ENCODE measurements at regions of chr5 and their contacts with region 1.

Region 1: DNA sequence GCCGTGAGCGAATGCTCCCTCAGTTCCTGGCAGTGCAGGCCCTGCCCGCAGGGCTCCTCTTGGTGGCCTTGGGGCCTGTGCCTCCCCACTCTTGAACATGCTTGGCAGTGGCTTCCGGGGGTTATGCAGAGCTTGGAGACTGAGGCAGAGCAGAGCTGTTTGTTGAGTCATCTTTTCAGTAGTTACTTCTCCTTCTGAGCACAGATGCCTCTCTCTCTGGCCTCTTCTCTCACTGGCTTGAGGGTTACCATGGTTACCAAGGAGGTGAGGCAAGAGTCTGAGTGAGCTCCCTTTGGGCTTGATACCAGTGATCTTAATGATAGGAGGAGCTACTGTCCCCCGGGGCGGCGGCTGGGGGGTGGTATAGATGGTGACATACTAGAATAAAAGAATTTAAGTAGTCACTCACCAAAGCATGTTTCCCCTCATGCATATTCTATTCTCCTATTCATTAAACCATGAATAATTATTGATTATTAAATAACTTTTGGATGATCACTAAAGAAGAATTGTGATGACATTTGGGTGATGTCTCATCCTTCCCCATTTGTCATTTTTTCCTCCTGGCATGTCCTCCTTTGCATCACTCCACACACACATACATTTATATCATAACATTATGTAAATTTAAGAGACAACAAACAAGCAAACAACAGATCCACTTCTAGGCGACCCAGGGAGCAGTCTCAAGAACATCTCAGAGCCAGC is 111.1 kb downstream of the ARHGAP26 start:
- DNase-seq: peak; percentile 23
- H3K4me3 ChIP-seq: no peak overlapping the region
- H3K27ac ChIP-seq: no peak overlapping the region
- H3K4me1 ChIP-seq: no peaks in the 10 kb centered on the region
- CTCF ChIP-seq: no peak

Region 2: DNA sequence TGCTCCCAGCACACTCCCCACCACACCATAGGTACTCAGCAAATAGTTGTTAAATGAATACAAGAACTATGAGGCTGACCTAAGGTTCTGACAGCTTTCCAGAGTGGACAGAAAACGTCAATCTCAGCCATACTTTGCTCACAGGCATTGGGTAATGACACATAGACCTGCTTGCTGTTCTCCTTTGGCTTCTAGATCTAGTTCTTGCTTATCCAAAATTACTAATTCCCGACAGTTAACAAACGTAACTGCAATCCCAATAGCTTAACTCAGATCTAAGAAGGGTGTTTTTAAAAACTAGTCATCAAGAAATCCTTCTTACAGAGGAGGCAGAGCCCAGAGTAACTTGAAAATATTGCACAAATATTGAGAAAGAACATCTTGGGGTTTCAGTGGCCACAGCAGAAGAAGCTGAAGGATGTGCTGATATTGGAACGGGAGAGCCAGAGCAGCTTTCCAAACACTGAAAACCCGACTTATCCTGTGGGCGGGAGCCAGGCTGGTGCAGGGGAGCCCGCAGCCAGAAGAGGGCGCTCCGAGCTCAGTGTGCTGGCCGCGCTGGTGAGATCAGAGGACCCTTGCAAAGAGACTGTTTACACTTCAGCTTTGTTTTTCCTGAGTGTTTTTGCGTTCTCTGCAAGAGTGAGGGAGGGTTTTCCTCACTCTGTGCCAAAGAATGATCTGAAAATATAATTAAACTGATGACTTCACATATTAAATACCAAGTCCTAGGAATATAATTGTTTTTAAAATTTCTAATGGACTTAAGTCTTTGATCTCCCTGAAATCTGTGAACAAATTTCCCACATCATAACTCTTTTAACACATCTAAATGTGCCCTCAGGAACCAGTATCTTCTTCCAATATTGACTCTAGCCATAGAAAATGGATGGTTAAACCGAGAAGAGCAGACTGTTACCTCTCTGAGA is 225.6 kb before region 1 on chr5:
- CTCF ChIA-PET with region 1: no interaction called
- POLR2A ChIA-PET with region 1: no interaction called
- intact Hi-C with region 1: loop called (anchors 5 kb)
- DNase-seq: peak; percentile 62
- H3K4me3 ChIP-seq: no peak overlapping the region
- H3K27ac ChIP-seq: no peak overlapping the region
- H3K4me1 ChIP-seq: no peaks in the 10 kb centered on the region
- CTCF ChIP-seq: peak; percentile 98

Measured in OCI-LY7 (cell line).